Psoas muscle (tissue), 8 donors: ENCODE measurements at regions of chr9 and their contacts with region 1.

Region 1: GRCh38 chr9:88578121-88579054 is 43.4 kb downstream of the NXNL2 start:
- DNase-seq: peak; percentile 75 to 86
- ATAC-seq: peak; percentile 65 to 86 (median 78)
- H3K4me3 ChIP-seq: no peak overlapping the region
- H3K27ac ChIP-seq: no peak overlapping the region
- H3K4me1 ChIP-seq: peaks cover 4% of the 10 kb centered on the region
- H3K27me3 ChIP-seq: peaks cover 0 to under 1% (median 0%) of the 10 kb centered on the region in 3 donors
- CTCF ChIP-seq: peak; percentile 92

Region 2: GRCh38 chr9:88173378-88173999 is 404.9 kb before region 1 on chr9:
- intact Hi-C with region 1: loop called in 1 of 2 experiments (anchors 10 kb)
- DNase-seq: no peak
- ATAC-seq: no peak
- H3K4me3 ChIP-seq: no peak overlapping the region
- H3K27ac ChIP-seq: no peak overlapping the region
- H3K4me1 ChIP-seq: no peaks in the 10 kb centered on the region
- H3K27me3 ChIP-seq: no peaks in the 10 kb centered on the region
- CTCF ChIP-seq: peak; percentile 11

Region 3: DNA sequence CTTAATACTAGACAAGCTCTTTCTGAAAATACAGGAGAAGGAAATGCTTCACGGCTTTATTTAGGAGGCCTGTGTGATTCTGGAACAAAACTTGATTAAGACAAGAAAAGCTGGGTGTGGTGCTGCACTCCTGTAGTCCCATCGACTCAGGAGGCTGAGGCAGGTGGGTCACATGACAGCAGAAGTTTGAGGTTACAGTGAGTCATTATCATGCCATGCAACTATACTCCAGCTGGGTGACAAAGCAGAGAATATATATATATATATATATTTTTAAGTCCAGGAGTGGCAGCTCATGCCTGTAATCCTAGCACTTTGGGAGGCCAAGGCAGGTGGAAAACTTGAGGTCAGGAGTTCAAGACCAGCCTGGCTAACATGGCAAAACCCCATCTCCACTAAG is 223.2 kb before region 1 on chr9:
- intact Hi-C with region 1: no loop called
- DNase-seq: no peak
- ATAC-seq: no peak
- H3K4me3 ChIP-seq: no peak overlapping the region
- H3K27ac ChIP-seq: no peak overlapping the region
- H3K4me1 ChIP-seq: no peaks in the 10 kb centered on the region
- H3K27me3 ChIP-seq: no peaks in the 10 kb centered on the region
- CTCF ChIP-seq: no peak

Region 4: DNA sequence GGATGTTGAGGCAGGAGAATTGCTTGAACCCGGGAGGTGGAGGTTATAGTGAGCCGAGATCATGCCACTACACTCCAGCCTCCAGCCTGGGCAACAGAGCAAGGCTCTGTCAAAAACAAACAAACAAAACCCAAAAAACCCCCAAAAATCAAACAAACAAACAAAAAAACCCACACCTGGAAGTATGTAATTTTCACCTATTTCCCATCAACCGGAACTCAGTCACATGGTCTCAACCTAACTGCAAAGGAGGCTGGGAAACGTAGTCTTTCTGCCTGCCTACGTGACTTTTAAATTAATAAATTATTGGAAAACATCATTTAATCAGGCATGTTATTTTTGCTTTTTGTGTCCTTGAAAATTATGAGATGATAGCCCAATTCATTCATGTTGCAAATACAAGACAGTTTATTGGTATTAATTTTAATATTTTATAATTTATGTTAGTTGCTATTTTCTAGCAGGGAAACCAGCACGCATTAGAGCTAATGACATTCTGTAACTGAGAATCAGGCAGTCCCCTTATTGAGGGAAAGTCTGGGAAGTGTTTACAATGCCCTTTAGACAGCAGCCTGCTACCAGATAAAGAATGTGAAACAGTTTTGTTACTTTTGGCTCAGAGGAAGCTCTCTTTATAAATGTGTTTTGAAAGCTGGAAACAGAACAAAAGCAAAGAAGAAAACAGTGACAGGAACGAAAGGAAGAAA is 66.9 kb after region 1 on chr9:
- intact Hi-C with region 1: no loop called
- DNase-seq: no peak
- ATAC-seq: no peak
- H3K4me3 ChIP-seq: no peak overlapping the region
- H3K27ac ChIP-seq: no peak overlapping the region
- H3K4me1 ChIP-seq: no peaks in the 10 kb centered on the region
- H3K27me3 ChIP-seq: no peaks in the 10 kb centered on the region
- CTCF ChIP-seq: no peak

Region 5: DNA sequence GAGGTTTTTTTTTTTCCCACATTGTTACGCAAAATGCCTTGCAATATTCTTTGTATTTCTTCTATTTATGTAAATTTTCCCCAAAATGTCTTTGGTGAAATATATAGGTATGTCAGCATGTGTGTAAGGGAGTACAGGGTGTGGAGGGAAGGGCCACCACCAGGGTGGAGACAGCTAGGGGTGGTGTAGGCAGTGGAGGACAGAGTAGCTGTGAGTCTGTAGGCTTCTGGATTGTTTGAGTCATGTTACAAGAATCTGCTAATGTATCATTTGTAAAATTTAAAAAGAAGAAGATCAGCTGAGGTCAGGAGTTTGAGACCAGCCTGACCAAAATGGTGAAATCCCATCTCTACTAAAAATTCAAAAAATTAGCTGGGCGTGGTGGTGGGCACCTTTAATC is 132.1 kb after region 1 on chr9:
- intact Hi-C with region 1: no loop called
- DNase-seq: no peak
- ATAC-seq: no peak
- H3K4me3 ChIP-seq: no peak overlapping the region
- H3K27ac ChIP-seq: no peak overlapping the region
- H3K4me1 ChIP-seq: no peaks in the 10 kb centered on the region
- H3K27me3 ChIP-seq: no peaks in the 10 kb centered on the region
- CTCF ChIP-seq: no peak